Activated CD4-positive, alpha-beta T cell treated with anti-CD3 and anti-CD28 coated beads for 36 hours (primary cell): ENCODE measurements at regions of chr5 and their contacts with region 1.

Region 1: GRCh38 chr5:80246001-80246758 is 9.7 kb downstream of the SERINC5 start:
- DNase-seq: no peak
- ATAC-seq: no peak
- H3K4me3 Mint-ChIP-seq: peak overlapping the region; percentile 41
- H3K27ac Mint-ChIP-seq: peak overlapping the region; percentile 72
- H3K4me1 Mint-ChIP-seq: peaks cover 62% of the 10 kb centered on the region
- H3K27me3 Mint-ChIP-seq: no peaks in the 10 kb centered on the region

Region 2: DNA sequence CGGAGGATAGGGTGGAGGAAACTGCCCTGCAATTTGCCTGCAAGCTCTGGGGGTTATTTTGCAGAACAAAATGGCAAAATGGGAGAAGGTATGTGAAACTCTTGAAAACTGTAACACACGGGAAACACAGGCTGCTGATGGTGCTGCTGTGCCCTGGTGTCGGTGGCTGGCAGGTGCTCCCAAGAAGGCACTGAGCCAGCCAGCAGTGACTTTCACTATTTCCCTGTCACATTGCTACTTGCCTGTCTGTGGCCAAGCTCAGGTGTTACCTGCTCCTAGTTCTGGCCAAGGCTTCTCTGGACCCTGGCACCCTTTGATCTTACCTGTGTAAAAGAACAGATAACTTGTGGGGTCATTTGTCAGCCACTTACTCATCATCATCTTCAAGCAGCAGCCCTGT is 454.3 kb before region 1 on chr5:
- CTCF ChIA-PET with region 1: no interaction called
- POLR2A ChIA-PET with region 1: no interaction called
- intact Hi-C with region 1: no loop called
- DNase-seq: no peak
- ATAC-seq: no peak
- H3K4me3 Mint-ChIP-seq: no peak overlapping the region
- H3K27ac Mint-ChIP-seq: no peak overlapping the region
- H3K4me1 Mint-ChIP-seq: peaks cover 3% of the 10 kb centered on the region
- H3K27me3 Mint-ChIP-seq: no peaks in the 10 kb centered on the region

Region 3: GRCh38 chr5:80150731-80151130 is 95.4 kb before region 1 on chr5:
- CTCF ChIA-PET with region 1: no interaction called
- POLR2A ChIA-PET with region 1: interaction called, 12 read pairs
- intact Hi-C with region 1: no loop called
- DNase-seq: peak; percentile 42
- ATAC-seq: peak; percentile 21
- H3K4me3 Mint-ChIP-seq: peak overlapping the region; percentile 28
- H3K27ac Mint-ChIP-seq: peak overlapping the region; percentile 89
- H3K4me1 Mint-ChIP-seq: peaks cover 62% of the 10 kb centered on the region
- H3K27me3 Mint-ChIP-seq: no peaks in the 10 kb centered on the region

Region 4: DNA sequence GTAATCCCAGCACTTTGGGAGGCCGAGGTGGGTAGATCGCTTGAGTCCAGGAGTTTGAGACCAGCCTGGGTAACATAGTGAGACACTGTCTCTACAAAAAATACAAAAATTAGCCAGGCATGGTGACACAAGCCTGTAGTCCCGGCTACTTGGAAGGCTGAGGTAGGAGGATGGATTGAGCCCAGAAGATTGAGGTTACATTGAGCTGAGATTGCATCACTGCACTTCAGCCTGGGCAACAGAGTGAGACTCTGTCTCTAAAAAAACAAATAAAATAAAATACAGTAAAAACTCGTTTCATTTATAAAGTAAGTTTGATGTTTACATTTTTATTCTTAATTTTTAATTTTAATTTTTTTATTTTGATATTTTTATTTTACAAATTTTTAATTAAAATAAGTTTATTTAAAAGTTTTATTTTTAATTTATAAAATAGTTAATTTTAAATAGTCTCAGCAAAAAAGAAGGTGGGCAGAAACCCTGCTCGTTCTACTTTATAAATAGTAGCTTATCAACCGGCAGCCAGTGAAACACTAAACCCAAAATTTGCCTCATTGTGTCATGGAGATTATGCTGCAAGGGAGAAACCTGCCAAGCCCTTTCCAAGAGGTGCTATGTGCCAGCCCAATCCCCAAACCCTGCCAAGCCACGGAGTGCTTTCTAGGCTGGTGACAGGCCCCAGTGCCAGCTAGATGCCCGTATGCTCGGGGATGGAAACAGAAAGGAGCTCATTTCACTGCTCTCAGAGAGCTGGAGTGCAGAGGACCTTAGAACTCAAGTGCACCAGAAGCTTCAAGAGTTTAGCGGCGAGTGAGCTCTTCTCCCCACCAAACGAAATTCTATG is 29.2 kb before region 1 on chr5:
- CTCF ChIA-PET with region 1: no interaction called
- POLR2A ChIA-PET with region 1: no interaction called
- intact Hi-C with region 1: loop called in 1 of 2 experiments (anchors 2 kb)
- DNase-seq: peak; percentile 52
- ATAC-seq: peak; percentile 27
- H3K4me3 Mint-ChIP-seq: peak overlapping the region; percentile 42
- H3K27ac Mint-ChIP-seq: peak overlapping the region; percentile 91
- H3K4me1 Mint-ChIP-seq: peaks cover 91% of the 10 kb centered on the region
- H3K27me3 Mint-ChIP-seq: no peaks in the 10 kb centered on the region